T-cell (primary cell): ENCODE measurements at regions of chr6 and their contacts with region 1.

Region 1: DNA sequence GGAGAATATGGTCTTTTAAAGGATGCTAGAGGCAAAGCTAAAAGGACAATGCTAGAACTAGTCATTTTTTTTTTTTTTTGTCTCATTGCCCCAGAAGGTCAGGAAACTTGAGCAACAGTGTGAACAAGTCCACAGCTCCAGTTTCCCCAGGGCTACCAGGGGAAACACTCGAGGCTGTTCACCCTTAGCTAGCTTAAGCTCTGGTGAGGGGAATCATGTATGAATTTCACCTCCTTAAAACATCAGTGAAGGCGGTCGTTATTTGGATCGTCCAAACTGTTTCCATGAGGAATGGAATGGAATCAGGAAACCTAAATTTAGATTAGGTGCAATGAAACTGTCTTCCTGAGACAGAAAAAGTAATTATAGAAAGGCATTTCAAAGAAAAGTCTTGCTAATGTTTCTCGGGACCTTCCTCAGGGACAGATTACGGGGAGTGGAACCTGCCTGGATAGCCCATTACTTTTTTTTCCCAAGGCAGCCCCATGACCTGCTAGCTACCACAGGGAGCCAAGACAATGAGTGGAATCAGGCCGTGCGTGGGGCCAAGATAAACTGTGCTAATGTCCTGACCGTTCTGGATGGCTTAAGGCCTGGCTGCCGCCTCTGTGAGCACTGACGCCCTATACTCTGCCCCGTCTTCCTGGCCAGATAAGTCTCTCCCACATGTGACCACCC is 164.8 kb upstream of the SGK1 start:
- DNase-seq: no peak
- ATAC-seq: no peak
- H3K4me3 ChIP-seq: no peak overlapping the region
- H3K4me3 Mint-ChIP-seq: no peak overlapping the region
- H3K27ac ChIP-seq: no peak overlapping the region
- H3K27ac Mint-ChIP-seq: no peak overlapping the region
- H3K4me1 ChIP-seq: no peaks in the 10 kb centered on the region
- H3K4me1 Mint-ChIP-seq: no peaks in the 10 kb centered on the region
- H3K27me3 ChIP-seq: no peaks in the 10 kb centered on the region
- H3K27me3 Mint-ChIP-seq: no peaks in the 10 kb centered on the region

Region 2: GRCh38 chr6:134589512-134589911 is 106.8 kb after region 1 on chr6:
- CTCF ChIA-PET with region 1: no interaction called
- POLR2A ChIA-PET with region 1: interaction called in 1 of 2 experiments, 10 read pairs
- DNase-seq: no peak
- ATAC-seq: no peak
- H3K4me3 ChIP-seq: no peak overlapping the region
- H3K4me3 Mint-ChIP-seq: no peak overlapping the region
- H3K27ac ChIP-seq: no peak overlapping the region
- H3K27ac Mint-ChIP-seq: no peak overlapping the region
- H3K4me1 ChIP-seq: no peaks in the 10 kb centered on the region
- H3K4me1 Mint-ChIP-seq: peaks cover 0 to 8% (median 0%) of the 10 kb centered on the region in 3 donors
- H3K27me3 ChIP-seq: no peaks in the 10 kb centered on the region
- H3K27me3 Mint-ChIP-seq: no peaks in the 10 kb centered on the region